ENCODE measurements at regions of chr5 and their contacts with region 1.

Region 1: GRCh38 chr5:132238169-132238744 is 10.6 kb upstream of the P4HA2 start:
- DNase-seq: peak; percentile 89
- ATAC-seq: peak; percentile 82

Region 2: DNA sequence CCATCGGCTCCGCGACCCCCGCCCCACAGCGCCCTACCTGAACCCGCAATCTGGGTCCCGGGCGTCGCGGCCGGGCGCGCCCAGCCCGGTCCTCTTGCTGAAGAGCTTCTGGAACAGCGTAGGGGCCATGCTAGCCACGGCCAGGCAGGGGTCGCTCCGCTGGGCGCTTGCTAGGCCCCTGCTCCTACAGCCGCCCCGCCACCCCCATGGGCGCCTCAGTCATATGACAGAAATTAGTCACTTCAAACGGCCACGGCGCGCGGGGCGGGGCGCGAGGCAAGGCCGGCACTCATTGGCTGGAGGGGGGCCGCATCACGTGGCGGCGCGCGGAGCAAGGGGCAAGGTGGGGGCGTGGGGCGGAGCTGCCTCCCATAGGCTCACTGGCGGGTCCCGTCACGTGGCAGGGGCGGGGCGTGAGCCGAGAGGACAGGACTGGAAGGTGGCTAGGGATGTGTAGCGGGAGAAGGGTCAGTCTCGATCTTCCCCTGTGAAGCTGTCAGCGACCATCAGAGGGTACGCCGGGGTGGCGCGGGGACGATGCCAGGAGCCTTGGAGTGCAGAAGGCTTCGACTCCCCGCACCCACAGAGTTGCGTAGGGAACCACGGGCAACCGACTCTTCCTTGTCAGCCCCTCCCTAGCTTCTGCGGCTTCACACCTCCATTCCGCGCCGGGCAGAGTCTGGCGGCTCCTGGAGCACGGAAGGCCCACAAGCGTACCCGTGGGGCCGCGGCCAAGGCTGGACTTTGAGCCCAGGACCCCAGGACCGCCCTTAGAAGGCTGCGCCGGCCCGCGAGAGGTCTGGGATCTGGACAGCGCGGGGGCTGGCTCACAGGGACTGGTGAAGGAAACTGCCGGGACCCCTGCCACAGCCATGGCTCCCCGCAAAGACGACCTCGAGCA is 441.2 kb before region 1 on chr5 and contains the start of gene FNIP1:
- intact Hi-C with region 1: no loop called
- DNase-seq: peak; percentile 100
- ATAC-seq: peak; percentile 100
- total RNA-seq, gene FNIP1: 39.4 TPM

Region 3: DNA sequence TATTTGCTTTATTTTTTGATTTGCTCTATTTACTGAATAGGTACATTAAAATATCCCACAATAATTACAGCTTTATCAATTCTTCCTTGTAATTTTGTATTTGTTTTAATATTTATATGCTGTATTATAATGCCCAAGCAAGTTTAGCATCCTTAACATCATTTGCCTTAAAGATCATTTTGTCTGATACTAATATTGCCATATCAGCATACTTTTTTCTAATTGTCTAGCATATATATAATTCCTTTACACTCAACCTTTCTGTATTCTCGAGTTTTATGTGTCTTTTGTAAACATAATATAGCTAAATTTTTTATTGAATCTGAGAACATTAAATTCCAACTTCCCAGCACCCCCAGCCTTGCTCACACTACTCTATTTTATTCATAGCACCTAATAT is 75.3 kb before region 1 on chr5:
- intact Hi-C with region 1: no loop called
- DNase-seq: no peak
- ATAC-seq: no peak

Region 4: DNA sequence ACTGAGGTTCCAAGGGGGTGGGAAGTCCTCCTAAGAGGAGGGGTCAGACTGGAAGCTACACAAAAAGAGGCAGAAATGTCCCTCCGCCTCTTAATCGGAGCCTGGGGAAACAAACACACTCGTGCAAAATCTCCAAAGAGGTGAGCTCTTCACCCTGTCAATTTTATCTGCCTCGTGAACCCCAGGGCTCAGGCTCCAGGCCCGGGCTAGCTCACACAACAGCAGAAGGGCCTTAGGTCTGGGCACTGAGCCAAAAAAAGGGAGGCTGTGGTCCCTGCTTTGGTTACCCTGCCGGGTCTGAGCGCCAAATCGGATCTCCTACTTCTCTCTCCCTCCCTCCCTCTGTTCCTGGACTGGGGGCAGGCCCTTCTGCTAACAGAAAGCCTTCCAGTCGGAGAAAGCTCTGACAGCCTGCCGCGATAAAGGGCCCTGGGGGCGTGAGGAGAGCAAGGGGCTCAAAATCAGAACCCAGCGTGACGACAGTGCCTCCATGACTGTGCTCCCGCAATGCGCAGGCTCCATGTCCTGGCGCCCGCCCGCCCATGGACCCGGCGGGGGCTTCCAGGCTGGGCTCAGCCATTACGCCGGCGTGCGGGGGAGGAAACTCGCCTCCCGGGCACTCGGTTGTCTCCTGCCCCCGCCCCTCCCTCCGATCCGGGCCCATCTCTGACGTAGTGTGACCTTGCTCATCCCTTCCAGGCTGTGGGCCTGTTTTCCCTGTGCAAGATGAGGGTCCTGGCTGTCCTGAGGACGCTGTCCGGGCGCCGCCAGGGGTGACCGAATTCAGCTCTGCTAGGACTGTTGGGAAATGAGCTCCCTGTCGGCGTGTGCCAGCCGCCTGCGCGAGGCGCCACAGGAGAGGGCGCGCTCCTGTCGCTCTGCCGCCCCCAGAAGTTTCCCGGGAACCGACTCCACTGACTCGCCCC is 55.1 kb after region 1 on chr5:
- intact Hi-C with region 1: loop called (anchors 10 kb)
- DNase-seq: peak; percentile 93
- ATAC-seq: peak; percentile 90

Measured in sciatic nerve (tissue), 2 donors.